ENCODE measurements at regions of chr3 and their contacts with region 1.

Region 1: GRCh38 chr3:101573449-101574387 is at the start of gene PCNP:
- DNase-seq: peak; percentile 100
- ATAC-seq: peak; percentile 81
- H3K4me3 Mint-ChIP-seq: peak within 1 kb of the TSS; percentile 89
- H3K27ac Mint-ChIP-seq: peak within 1 kb of the TSS; percentile 96
- H3K4me1 Mint-ChIP-seq: peaks cover 65% of the 10 kb centered on the region
- H3K27me3 Mint-ChIP-seq: no peaks in the 10 kb centered on the region
- total RNA-seq, gene PCNP: 180 to 181 TPM

Region 2: GRCh38 chr3:101512646-101513418 is 60.9 kb before region 1 on chr3 and contains the start of gene SENP7:
- CTCF ChIA-PET with region 1: interaction called, 41 read pairs
- POLR2A ChIA-PET with region 1: interaction called, 24 read pairs
- DNase-seq: peak; percentile 84
- ATAC-seq: peak; percentile 75
- H3K4me3 Mint-ChIP-seq: peak within 1 kb of the TSS; percentile 97
- H3K27ac Mint-ChIP-seq: peak within 1 kb of the TSS; percentile 97
- H3K4me1 Mint-ChIP-seq: peaks cover 34% of the 10 kb centered on the region
- H3K27me3 Mint-ChIP-seq: no peaks in the 10 kb centered on the region
- total RNA-seq, gene SENP7: 20.6 to 20.9 TPM

Region 3: DNA sequence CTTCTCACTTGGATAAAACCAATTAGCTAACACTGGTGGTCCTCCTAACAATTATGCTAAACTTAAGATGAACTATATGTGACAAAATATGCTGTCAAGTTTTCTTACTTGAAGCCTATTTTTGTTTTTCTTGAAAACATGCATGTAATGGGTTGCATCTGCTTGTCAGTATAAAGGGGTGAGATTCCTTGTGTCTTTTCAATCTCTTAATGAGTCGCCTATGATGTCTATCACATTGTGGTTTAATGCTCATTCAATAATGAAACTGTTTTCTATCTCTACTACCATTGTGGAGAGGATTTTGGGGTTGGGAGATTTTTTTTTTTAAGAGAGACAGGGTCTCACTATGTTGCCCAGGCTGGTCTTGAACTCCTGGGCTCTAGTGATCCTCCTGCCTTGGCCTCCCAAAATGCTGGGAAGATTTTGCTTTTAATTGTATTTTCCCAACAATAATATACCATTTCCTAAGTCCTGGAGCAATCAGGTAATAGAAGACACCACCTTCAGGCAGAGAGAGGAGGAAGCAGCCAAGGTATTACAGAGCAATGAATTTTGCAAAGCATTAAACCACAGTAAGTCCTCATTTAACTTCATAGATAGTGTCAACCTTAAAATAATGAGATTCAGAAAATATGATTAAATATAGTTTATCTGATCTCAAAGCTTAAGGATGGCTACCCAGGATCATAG is 29.4 kb before region 1 on chr3:
- CTCF ChIA-PET with region 1: interaction called, 14 read pairs
- POLR2A ChIA-PET with region 1: interaction called, 9 read pairs
- DNase-seq: no peak
- ATAC-seq: no peak
- H3K4me3 Mint-ChIP-seq: no peak overlapping the region
- H3K27ac Mint-ChIP-seq: peak overlapping the region; percentile 47
- H3K4me1 Mint-ChIP-seq: peaks cover 26% of the 10 kb centered on the region
- H3K27me3 Mint-ChIP-seq: no peaks in the 10 kb centered on the region

Region 4: DNA sequence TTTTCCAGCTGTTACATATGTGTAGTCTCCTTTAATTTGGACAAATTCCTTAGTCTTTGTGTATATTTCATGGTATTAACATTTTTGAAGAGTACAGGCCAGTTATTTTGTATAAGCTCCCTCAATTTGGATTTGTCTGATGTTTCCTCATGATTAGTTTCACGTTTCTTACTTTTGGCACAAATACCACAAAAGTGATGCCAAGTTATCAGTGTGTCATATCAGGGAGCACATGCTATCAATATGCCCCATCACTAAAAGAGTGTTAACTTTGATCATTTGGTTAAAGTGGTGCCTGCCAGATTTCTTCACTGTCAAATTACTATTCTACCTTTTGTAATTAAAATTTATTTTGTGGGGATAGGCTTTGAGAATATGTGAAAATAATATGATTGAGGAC is 14.9 kb after region 1 on chr3:
- CTCF ChIA-PET with region 1: interaction called, 8 read pairs
- POLR2A ChIA-PET with region 1: interaction called, 17 read pairs
- DNase-seq: no peak
- ATAC-seq: no peak
- H3K4me3 Mint-ChIP-seq: no peak overlapping the region
- H3K27ac Mint-ChIP-seq: no peak overlapping the region
- H3K4me1 Mint-ChIP-seq: no peaks in the 10 kb centered on the region
- H3K27me3 Mint-ChIP-seq: no peaks in the 10 kb centered on the region

Region 5: GRCh38 chr3:101685870-101686412 is 112.2 kb after region 1 on chr3:
- CTCF ChIA-PET with region 1: interaction called, 14 read pairs
- POLR2A ChIA-PET with region 1: interaction called, 4 read pairs
- DNase-seq: no peak
- ATAC-seq: peak; percentile 9
- H3K4me3 Mint-ChIP-seq: peak overlapping the region; percentile 97
- H3K27ac Mint-ChIP-seq: peak overlapping the region; percentile 97
- H3K4me1 Mint-ChIP-seq: peaks cover 38% of the 10 kb centered on the region
- H3K27me3 Mint-ChIP-seq: no peaks in the 10 kb centered on the region